ENCODE measurements at regions of chr4 and their contacts with region 1.

Region 1: GRCh38 chr4:10116580-10117358 is at the start of gene WDR1:
- DNase-seq: peak; percentile 82 to 99 (median 94)
- ATAC-seq: peak; percentile 71
- H3K4me3 ChIP-seq: peak within 1 kb of the TSS; percentile 83 to 91
- H3K4me3 Mint-ChIP-seq: peak within 1 kb of the TSS; percentile 95
- H3K27ac ChIP-seq: peak within 1 kb of the TSS; percentile 96 to 98
- H3K27ac Mint-ChIP-seq: peak within 1 kb of the TSS; percentile 99
- H3K4me1 ChIP-seq: peaks cover 63% of the 10 kb centered on the region
- H3K4me1 Mint-ChIP-seq: peaks cover 74% of the 10 kb centered on the region
- H3K27me3 ChIP-seq: no peaks in the 10 kb centered on the region
- H3K27me3 Mint-ChIP-seq: no peaks in the 10 kb centered on the region
- CTCF ChIP-seq: no peak
- total RNA-seq, gene WDR1: 220 to 224 TPM

Region 2: GRCh38 chr4:8158710-8159536 is 1957.8 kb before region 1 on chr4 and contains the start of gene ABLIM2:
- CTCF ChIA-PET with region 1: no interaction called
- POLR2A ChIA-PET with region 1: no interaction called
- intact Hi-C with region 1: loop called in 1 of 2 experiments (anchors 5 kb)
- DNase-seq: peak; percentile 97 to 100 (median 99)
- ATAC-seq: peak; percentile 99
- H3K4me3 ChIP-seq: peak within 1 kb of the TSS; percentile 90 to 97
- H3K4me3 Mint-ChIP-seq: peak within 1 kb of the TSS; percentile 89
- H3K27ac ChIP-seq: peak within 1 kb of the TSS; percentile 48 to 56
- H3K27ac Mint-ChIP-seq: peak within 1 kb of the TSS; percentile 72
- H3K4me1 ChIP-seq: peaks cover 18% of the 10 kb centered on the region
- H3K4me1 Mint-ChIP-seq: peaks cover 16% of the 10 kb centered on the region
- H3K27me3 ChIP-seq: peaks cover 0 to 6% of the 10 kb centered on the region in 2 experiments
- H3K27me3 Mint-ChIP-seq: no peaks in the 10 kb centered on the region
- CTCF ChIP-seq: no peak
- total RNA-seq, gene ABLIM2: 1.2 to 1.6 TPM

Region 3: DNA sequence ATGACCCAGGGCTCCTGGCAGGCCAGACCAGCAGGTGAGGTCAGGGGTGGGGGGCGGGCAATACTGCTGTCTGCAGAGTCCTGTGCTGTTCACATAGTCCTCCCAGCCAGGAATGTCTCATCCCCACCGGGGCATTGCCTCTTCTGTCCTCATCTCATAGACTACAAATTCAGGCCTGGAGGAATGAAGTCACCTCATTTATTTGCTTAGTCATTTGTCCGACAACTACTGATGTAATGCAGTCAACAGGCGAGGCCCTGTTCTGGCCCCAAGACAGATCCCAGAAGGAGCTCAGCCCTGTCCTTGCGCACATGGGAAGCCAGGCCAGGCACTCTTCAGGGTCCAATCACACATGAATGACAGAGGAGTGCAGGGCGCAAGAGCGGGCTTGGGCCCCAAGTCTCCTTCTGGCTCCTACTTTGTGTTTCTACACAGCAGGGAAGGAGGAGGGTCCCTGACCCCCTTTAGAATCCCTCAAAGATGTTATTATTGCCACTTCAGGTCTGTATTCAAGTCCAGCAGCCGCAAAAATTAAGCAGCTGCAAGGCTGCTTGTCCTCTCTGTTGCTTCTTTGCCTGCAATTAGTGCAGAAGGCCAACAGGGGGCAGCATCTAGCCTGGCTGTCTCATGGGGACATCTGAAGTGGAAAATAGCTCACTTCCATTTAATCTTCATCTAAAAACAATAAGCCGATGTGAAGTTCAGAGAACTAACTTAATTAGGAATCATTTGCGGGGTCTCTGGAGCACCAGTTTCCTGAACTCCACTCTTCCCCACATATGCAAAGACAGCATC is 1230.0 kb before region 1 on chr4:
- CTCF ChIA-PET with region 1: no interaction called
- POLR2A ChIA-PET with region 1: no interaction called
- intact Hi-C with region 1: no loop called
- DNase-seq: no peak
- ATAC-seq: no peak
- H3K4me3 ChIP-seq: no peak overlapping the region
- H3K4me3 Mint-ChIP-seq: no peak overlapping the region
- H3K27ac ChIP-seq: no peak overlapping the region
- H3K27ac Mint-ChIP-seq: no peak overlapping the region
- H3K4me1 ChIP-seq: no peaks in the 10 kb centered on the region
- H3K4me1 Mint-ChIP-seq: no peaks in the 10 kb centered on the region
- H3K27me3 ChIP-seq: peaks cover 0 to 3% of the 10 kb centered on the region in 2 experiments
- H3K27me3 Mint-ChIP-seq: peaks cover 34% of the 10 kb centered on the region
- CTCF ChIP-seq: peak; percentile 19

Region 4: GRCh38 chr4:10018818-10019461 is 97.8 kb before region 1 on chr4:
- CTCF ChIA-PET with region 1: interaction called, 3 read pairs
- POLR2A ChIA-PET with region 1: interaction called, 6 read pairs
- intact Hi-C with region 1: loop called in 1 of 2 experiments (anchors 5 kb)
- DNase-seq: peak; percentile 74 to 96 (median 93)
- ATAC-seq: peak; percentile 99
- H3K4me3 ChIP-seq: peak overlapping the region; percentile 59 to 60
- H3K4me3 Mint-ChIP-seq: peak overlapping the region; percentile 87
- H3K27ac ChIP-seq: peak overlapping the region; percentile 66 to 76
- H3K27ac Mint-ChIP-seq: peak overlapping the region; percentile 95
- H3K4me1 ChIP-seq: peaks cover 11% of the 10 kb centered on the region
- H3K4me1 Mint-ChIP-seq: peaks cover 12% of the 10 kb centered on the region
- H3K27me3 ChIP-seq: peaks cover 0 to 2% of the 10 kb centered on the region in 2 experiments
- H3K27me3 Mint-ChIP-seq: no peaks in the 10 kb centered on the region
- CTCF ChIP-seq: peak; percentile 96

Region 5: GRCh38 chr4:10089346-10089745 is 27.4 kb before region 1 on chr4:
- CTCF ChIA-PET with region 1: interaction called, 5 read pairs
- POLR2A ChIA-PET with region 1: interaction called, 11 read pairs
- intact Hi-C with region 1: loop called (anchors 5 kb)
- DNase-seq: peak in 2 of 9 experiments; percentile 24 to 25
- ATAC-seq: no peak
- H3K4me3 ChIP-seq: no peak overlapping the region
- H3K4me3 Mint-ChIP-seq: no peak overlapping the region
- H3K27ac ChIP-seq: no peak overlapping the region
- H3K27ac Mint-ChIP-seq: peak overlapping the region; percentile 18
- H3K4me1 ChIP-seq: peaks cover 29% of the 10 kb centered on the region
- H3K4me1 Mint-ChIP-seq: peaks cover 47% of the 10 kb centered on the region
- H3K27me3 ChIP-seq: no peaks in the 10 kb centered on the region
- H3K27me3 Mint-ChIP-seq: no peaks in the 10 kb centered on the region
- CTCF ChIP-seq: peak; percentile 32

Region 6: DNA sequence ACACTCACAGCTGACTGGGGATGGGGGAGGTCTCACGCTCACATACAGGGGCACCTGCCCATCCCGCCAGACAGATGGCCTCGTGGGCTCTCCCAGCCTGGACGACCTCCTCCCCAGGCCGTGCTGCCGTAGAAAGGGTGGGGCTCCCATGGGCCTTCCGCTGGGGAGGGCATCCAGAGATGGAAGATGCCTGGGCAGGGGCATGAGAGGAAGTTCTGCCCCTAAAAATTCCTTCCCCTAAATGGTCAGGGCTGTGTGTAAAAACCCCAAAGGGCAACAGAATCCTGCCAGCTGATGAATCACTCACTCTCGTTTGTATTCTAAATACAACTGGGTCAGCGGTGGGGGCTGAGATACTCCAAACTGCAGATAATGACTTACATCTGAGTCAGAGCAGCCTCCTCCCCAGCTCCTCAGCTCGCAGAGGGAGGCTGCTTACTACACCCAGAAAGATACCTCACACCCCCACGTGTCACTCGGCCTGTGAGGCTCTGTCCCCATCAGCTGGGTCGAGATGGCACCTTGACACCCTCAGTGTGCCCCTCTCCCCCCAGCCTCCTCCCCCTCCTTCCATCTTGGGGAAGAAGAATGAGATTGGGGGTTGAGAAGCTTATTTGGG is 10.2 kb before region 1 on chr4:
- CTCF ChIA-PET with region 1: interaction called, 3 read pairs
- POLR2A ChIA-PET with region 1: interaction called, 37 read pairs
- intact Hi-C with region 1: loop called in 1 of 2 experiments (anchors 1 kb)
- DNase-seq: peak; percentile 14 to 83 (median 72)
- ATAC-seq: peak; percentile 77
- H3K4me3 ChIP-seq: no peak overlapping the region
- H3K4me3 Mint-ChIP-seq: peak overlapping the region; percentile 61
- H3K27ac ChIP-seq: peak overlapping the region; percentile 38 to 78
- H3K27ac Mint-ChIP-seq: peak overlapping the region; percentile 94
- H3K4me1 ChIP-seq: peaks cover 97% of the 10 kb centered on the region
- H3K4me1 Mint-ChIP-seq: peaks cover 99% of the 10 kb centered on the region
- H3K27me3 ChIP-seq: no peaks in the 10 kb centered on the region
- H3K27me3 Mint-ChIP-seq: no peaks in the 10 kb centered on the region
- CTCF ChIP-seq: no peak

Region 7: GRCh38 chr4:11471618-11472017 is 1354.8 kb after region 1 on chr4:
- CTCF ChIA-PET with region 1: no interaction called
- POLR2A ChIA-PET with region 1: no interaction called
- intact Hi-C with region 1: loop called in 1 of 2 experiments (anchors 5 kb)
- DNase-seq: peak; percentile 4 to 86 (median 58)
- ATAC-seq: peak; percentile 96
- H3K4me3 ChIP-seq: peak overlapping the region; percentile 37 to 67
- H3K4me3 Mint-ChIP-seq: peak overlapping the region; percentile 79
- H3K27ac ChIP-seq: peak overlapping the region; percentile 70 to 82
- H3K27ac Mint-ChIP-seq: peak overlapping the region; percentile 96
- H3K4me1 ChIP-seq: peaks cover 28% of the 10 kb centered on the region
- H3K4me1 Mint-ChIP-seq: peaks cover 42% of the 10 kb centered on the region
- H3K27me3 ChIP-seq: no peaks in the 10 kb centered on the region
- H3K27me3 Mint-ChIP-seq: no peaks in the 10 kb centered on the region
- CTCF ChIP-seq: no peak

Measured in CD8-positive, alpha-beta T cell (primary cell).